Transverse colon (tissue), 4 donors: ENCODE measurements at regions of chr2 and their contacts with region 1.

Region 1: DNA sequence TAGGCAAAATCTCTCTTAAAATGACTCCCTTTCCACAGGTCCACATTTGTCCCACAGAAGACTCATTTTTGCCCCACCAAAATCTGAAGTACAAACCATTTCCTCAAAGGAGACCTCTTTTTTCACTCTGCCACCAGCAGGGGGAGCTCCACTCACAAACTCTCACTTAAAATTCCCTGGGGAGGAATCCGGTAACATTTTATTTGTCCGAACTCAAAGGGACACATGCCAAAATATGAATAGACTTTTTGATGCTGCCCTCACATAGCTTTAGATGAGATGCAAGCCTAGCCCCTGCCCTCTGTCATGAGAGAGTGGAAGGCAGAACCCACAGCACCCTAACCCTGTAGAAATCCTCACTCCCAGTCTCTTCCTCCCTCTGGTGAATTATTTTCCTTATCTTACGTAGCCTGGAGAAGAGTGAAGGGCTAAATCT is 57.1 kb downstream of the RMDN2 start:
- DNase-seq: peak; percentile 75
- H3K4me3 ChIP-seq: no peak overlapping the region
- H3K27ac ChIP-seq: no peak overlapping the region
- H3K4me1 ChIP-seq: no peaks in the 10 kb centered on the region
- H3K27me3 ChIP-seq: no peaks in the 10 kb centered on the region
- CTCF ChIP-seq: peak; percentile 72 to 87 (median 81)
- EP300 ChIP-seq: no peak
- POLR2A ChIP-seq: no peak

Region 2: GRCh38 chr2:37402636-37403035 is 579.5 kb before region 1 on chr2:
- in situ Hi-C with region 1: no loop called
- intact Hi-C with region 1: no loop called
- DNase-seq: no peak
- H3K4me3 ChIP-seq: no peak overlapping the region
- H3K27ac ChIP-seq: no peak overlapping the region
- H3K4me1 ChIP-seq: peaks cover 0 to 3% (median 0%) of the 10 kb centered on the region in 4 donors
- H3K27me3 ChIP-seq: no peaks in the 10 kb centered on the region
- CTCF ChIP-seq: no peak
- EP300 ChIP-seq: no peak
- POLR2A ChIP-seq: no peak

Region 3: DNA sequence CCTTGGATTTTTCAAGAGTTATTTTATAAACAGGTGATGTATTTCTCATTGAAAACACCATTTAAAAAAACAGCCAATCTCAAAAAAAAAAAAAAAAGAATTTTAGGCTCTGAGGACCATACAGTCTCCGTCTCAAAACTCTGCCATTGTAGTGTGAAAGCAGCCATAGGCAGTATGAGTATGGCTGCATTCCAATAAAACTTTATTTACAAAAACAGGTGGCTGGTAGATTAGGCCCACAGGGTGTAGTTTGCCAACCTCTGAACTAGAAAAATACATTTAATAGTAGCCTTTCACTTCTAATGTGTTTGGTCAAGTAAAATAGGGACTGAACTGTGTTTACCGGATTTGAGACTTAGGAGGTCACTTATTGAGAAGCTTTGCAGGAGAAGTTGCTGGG is 37.9 kb before region 1 on chr2:
- in situ Hi-C with region 1: no loop called
- intact Hi-C with region 1: loop called (anchors 1 kb)
- DNase-seq: no peak
- H3K4me3 ChIP-seq: no peak overlapping the region
- H3K27ac ChIP-seq: no peak overlapping the region
- H3K4me1 ChIP-seq: no peaks in the 10 kb centered on the region
- H3K27me3 ChIP-seq: no peaks in the 10 kb centered on the region
- CTCF ChIP-seq: no peak
- EP300 ChIP-seq: no peak
- POLR2A ChIP-seq: no peak

Region 4: DNA sequence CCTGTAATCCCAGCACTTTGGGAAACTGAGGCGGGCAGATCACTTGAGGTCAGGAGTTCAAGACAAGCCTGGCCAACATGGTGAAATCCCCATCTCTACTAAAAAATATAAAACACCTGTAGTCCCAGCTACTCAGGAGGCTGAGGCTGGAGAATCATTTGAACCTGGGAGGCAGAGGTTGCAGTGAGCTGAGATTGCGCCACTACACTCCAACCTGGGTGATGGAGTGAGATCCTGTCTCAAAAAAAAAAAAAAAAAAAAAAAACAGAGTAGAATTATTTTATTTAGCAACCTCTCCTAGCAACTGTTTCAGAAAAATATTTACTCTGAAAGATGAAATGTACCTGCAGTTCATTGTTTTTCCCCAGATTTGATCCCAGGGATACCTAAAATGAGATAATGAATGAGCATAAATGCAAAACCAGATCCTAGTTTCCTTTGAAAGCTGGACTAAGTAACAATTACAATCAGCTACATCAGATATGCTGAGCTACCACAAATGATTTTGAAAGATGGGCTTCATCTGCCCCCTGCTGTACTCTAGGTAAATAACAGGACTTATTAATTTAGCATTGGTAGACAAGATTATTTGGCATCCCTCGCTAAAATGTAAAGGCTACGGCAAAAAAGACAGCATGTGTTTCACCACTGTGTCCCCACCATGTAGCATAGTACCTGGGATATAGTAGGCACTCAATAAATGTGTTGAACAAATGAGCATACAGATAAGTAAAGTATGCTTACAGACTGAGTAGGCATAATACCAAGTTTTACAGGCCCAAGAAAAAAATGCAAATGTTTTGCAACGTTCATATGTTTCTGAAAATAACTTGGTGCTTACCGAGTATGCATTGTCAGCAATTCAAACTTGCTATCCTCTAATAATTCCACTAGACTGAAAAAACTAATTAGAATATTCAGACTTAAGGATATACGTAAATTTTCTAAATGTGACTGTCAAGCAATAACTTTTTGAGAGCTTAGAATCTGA is 292.4 kb after region 1 on chr2:
- in situ Hi-C with region 1: loop called in 3 of 4 experiments (anchors 10 kb)
- intact Hi-C with region 1: loop called (anchors 1 kb)
- DNase-seq: no peak
- H3K4me3 ChIP-seq: no peak overlapping the region
- H3K27ac ChIP-seq: no peak overlapping the region
- H3K4me1 ChIP-seq: peaks cover 0 to 13% (median 0%) of the 10 kb centered on the region in 4 donors
- H3K27me3 ChIP-seq: no peaks in the 10 kb centered on the region
- CTCF ChIP-seq: peak; percentile 56 to 78 (median 57)
- EP300 ChIP-seq: no peak
- POLR2A ChIP-seq: no peak

Region 5: GRCh38 chr2:38508311-38509039 is 526.3 kb after region 1 on chr2:
- in situ Hi-C with region 1: loop called in 1 of 4 experiments (anchors 25 kb)
- intact Hi-C with region 1: no loop called
- DNase-seq: peak; percentile 91
- H3K4me3 ChIP-seq: no peak overlapping the region
- H3K27ac ChIP-seq: peak overlapping the region; percentile 38 to 74 (median 58)
- H3K4me1 ChIP-seq: peaks cover 0 to 11% (median 9%) of the 10 kb centered on the region in 4 donors
- H3K27me3 ChIP-seq: no peaks in the 10 kb centered on the region
- CTCF ChIP-seq: peak; percentile 25 to 43 (median 41)
- EP300 ChIP-seq: no peak
- POLR2A ChIP-seq: no peak